CD8-positive, alpha-beta T cell (primary cell): ENCODE measurements at regions of chr7 and their contacts with region 1.

Region 1: GRCh38 chr7:25862260-25863037 is 289.5 kb upstream of the NFE2L3 start:
- DNase-seq: peak in 7 of 9 experiments; percentile 36 to 82 (median 53)
- ATAC-seq: peak; percentile 83
- H3K4me3 ChIP-seq: peak overlapping the region in 1 of 2 experiments; percentile 13
- H3K4me3 Mint-ChIP-seq: peak overlapping the region; percentile 11
- H3K27ac ChIP-seq: no peak overlapping the region
- H3K27ac Mint-ChIP-seq: no peak overlapping the region
- H3K4me1 ChIP-seq: peaks cover 14% of the 10 kb centered on the region
- H3K4me1 Mint-ChIP-seq: peaks cover 17% of the 10 kb centered on the region
- H3K27me3 ChIP-seq: peaks cover 64 to 84% of the 10 kb centered on the region in 2 experiments
- H3K27me3 Mint-ChIP-seq: peaks cover 69% of the 10 kb centered on the region
- CTCF ChIP-seq: no peak

Region 2: GRCh38 chr7:26291699-26292538 is 429.5 kb after region 1 on chr7 and contains the start of gene SNX10:
- CTCF ChIA-PET with region 1: no interaction called
- POLR2A ChIA-PET with region 1: no interaction called
- intact Hi-C with region 1: loop called in 1 of 2 experiments (anchors 10 kb)
- DNase-seq: peak; percentile 45 to 91 (median 72)
- ATAC-seq: peak; percentile 79
- H3K4me3 ChIP-seq: peak within 1 kb of the TSS; percentile 70 to 94
- H3K4me3 Mint-ChIP-seq: peak within 1 kb of the TSS; percentile 91
- H3K27ac ChIP-seq: peak within 1 kb of the TSS; percentile 43 to 78
- H3K27ac Mint-ChIP-seq: peak within 1 kb of the TSS; percentile 85
- H3K4me1 ChIP-seq: peaks cover 32% of the 10 kb centered on the region
- H3K4me1 Mint-ChIP-seq: peaks cover 38% of the 10 kb centered on the region
- H3K27me3 ChIP-seq: no peaks in the 10 kb centered on the region
- H3K27me3 Mint-ChIP-seq: no peaks in the 10 kb centered on the region
- CTCF ChIP-seq: no peak
- total RNA-seq, gene SNX10: 3.9 to 7.0 TPM

Region 3: DNA sequence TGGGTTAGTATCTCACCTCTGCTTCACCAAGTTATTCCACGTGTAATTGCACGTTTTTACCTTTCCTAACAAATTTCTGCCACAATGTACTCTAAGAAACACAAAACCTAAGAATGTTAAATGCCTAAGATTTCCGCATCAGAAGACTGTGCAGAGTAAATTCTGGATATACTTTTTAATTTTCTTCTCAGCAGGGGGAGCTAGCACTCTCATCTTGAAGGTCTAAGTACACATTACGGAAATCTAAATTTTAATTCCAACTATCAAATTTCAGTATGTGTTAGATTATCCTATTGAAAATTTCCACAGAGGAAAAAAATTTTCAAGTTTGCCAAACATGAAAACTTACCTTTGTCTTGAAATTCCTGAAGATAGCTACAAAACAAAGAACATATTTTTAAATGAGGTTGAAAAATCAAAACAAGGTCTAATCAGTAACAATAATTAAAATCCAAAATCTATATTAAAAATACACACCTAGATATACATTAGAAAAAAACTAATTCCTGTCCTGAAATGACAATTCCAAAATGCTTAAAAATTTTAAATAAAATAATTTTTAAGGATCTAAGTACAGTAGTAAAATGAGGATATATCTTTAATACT is 991.4 kb after region 1 on chr7:
- CTCF ChIA-PET with region 1: no interaction called
- POLR2A ChIA-PET with region 1: no interaction called
- intact Hi-C with region 1: loop called in 1 of 2 experiments (anchors 5 kb)
- DNase-seq: peak in 2 of 9 experiments; percentile 48 to 51
- ATAC-seq: no peak
- H3K4me3 ChIP-seq: no peak overlapping the region
- H3K4me3 Mint-ChIP-seq: no peak overlapping the region
- H3K27ac ChIP-seq: no peak overlapping the region
- H3K27ac Mint-ChIP-seq: no peak overlapping the region
- H3K4me1 ChIP-seq: no peaks in the 10 kb centered on the region
- H3K4me1 Mint-ChIP-seq: peaks cover 8% of the 10 kb centered on the region
- H3K27me3 ChIP-seq: peaks cover 0 to 4% of the 10 kb centered on the region in 2 experiments
- H3K27me3 Mint-ChIP-seq: peaks cover 40% of the 10 kb centered on the region
- CTCF ChIP-seq: peak; percentile 37

Region 4: DNA sequence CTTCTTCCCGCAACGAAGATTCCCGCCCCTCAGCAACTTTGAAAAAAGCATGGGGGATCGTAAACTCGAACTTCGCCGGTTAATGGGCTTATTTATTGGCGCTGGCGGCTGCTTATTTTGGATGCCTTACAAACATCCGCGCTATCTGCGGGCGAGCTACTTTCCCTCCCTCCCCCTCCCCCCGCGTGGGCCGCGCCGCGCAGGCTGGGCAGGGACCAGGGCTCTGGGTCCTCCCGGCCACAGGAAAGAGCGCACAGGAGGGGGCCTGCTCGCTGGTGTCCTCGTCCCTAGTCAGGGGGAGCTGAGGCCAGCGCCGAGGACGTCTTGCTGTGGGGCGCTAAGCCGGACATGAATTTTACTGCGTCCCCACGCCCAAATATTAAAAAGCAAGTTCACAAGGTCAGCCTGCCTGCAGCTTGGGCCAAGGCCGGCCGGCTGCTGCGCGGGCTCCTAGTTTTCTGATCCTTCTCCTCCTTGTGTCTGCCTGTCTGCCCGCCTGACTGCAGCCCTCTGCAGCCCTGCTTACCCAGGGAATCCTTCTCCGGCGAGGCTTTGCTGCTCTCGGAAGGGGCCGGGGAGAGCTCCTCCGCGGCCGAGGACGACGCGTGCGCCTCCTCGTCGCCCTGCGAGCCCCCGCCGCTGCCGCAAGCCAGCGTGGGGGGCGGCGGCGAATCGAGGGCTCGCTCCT is 1310.5 kb after region 1 on chr7:
- CTCF ChIA-PET with region 1: no interaction called
- POLR2A ChIA-PET with region 1: no interaction called
- intact Hi-C with region 1: loop called in 1 of 2 experiments (anchors 2 kb)
- DNase-seq: peak in 1 of 9 experiments; percentile 56
- ATAC-seq: peak; percentile 34
- H3K4me3 ChIP-seq: peak overlapping the region; percentile 27 to 45
- H3K4me3 Mint-ChIP-seq: peak overlapping the region; percentile 47
- H3K27ac ChIP-seq: no peak overlapping the region
- H3K27ac Mint-ChIP-seq: no peak overlapping the region
- H3K4me1 ChIP-seq: peaks cover 34% of the 10 kb centered on the region
- H3K4me1 Mint-ChIP-seq: peaks cover 31% of the 10 kb centered on the region
- H3K27me3 ChIP-seq: peaks cover 58 to 65% of the 10 kb centered on the region in 2 experiments
- H3K27me3 Mint-ChIP-seq: peaks cover 62% of the 10 kb centered on the region
- CTCF ChIP-seq: no peak